Endothelial cell of umbilical vein (primary cell): ENCODE measurements at regions of chr17 and their contacts with region 1.

Region 1: DNA sequence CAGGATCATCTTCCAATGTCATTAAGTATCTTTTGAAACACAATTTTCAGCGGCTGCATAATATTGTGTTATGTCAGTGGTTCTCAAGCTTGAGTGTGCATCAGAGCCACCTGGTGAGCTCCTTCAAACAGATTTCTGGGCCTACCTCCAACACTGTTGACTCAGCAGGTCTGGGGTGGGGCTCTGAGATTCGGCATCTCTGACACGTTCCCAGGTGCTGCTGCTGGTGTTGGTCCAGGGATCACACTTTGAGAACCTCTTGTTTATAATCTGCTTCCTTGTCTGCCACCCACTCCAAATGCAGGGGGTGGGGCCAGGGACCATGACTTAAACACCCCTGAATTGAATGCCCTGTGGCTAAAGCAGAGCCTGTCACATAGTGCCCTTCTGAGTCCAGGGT is 73.8 kb upstream of the HNF1B start:
- DNase-seq: no peak
- H3K4me3 ChIP-seq: no peak overlapping the region
- H3K27ac ChIP-seq: no peak overlapping the region
- H3K4me1 ChIP-seq: peaks cover 3% of the 10 kb centered on the region
- H3K27me3 ChIP-seq: peaks cover 9% of the 10 kb centered on the region in 2 experiments
- CTCF ChIP-seq: no peak
- POLR2A ChIP-seq: no peak

Region 2: DNA sequence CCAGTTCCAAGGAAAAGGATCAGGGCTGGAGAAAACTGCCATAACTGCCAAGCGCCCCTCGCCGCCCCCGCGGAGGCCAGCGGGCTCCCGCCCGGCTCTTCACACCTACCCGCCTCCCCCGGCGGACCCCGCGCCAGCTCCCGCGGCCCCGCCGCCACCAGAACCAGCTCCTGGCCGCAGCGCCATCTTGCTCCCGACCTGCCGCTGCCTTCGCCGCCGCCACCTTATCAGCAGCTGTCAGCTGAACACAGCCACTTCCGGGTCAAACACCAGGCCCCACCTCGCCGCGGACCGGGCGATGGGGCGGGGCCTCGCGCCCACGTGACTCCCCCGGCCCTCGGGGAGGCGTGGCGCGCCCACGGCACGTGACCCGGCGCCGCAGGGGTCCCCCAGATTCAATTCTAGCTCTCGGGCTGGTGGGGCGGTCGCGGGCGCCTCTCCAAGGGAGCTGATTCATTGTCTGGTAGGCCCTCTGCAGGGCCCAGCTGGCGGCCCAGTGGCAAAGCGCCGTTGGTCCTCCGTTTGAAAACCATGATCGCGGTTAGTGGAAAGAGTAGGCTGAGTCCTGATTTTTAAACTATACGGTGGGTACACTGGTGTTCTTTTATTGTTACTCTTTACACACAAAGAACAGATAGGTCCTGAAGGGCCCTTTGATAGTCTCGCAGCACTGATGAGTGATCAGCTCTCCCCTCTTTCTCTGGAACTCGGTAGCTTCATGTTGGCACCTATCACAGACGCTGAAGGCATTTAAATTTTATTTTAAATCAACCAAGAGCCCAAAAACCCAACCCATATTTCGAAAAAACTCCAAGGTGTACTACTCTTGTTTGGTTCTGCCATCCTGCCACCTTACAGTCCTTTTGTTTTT is 209.3 kb before region 1 on chr17 and contains the start of gene SYNRG:
- CTCF ChIA-PET with region 1: interaction called, 11 read pairs
- POLR2A ChIA-PET with region 1: no interaction called
- dilution Hi-C with region 1: no loop called
- intact Hi-C with region 1: no loop called
- DNase-seq: peak; percentile 98
- H3K4me3 ChIP-seq: peak within 1 kb of the TSS; percentile 79 to 97 (median 97)
- H3K27ac ChIP-seq: peak within 1 kb of the TSS; percentile 82
- H3K4me1 ChIP-seq: peaks cover 30% of the 10 kb centered on the region
- H3K27me3 ChIP-seq: no peaks in the 10 kb centered on the region
- CTCF ChIP-seq: peak; percentile 12 to 47
- POLR2A ChIP-seq: peak; percentile 92
- total RNA-seq, gene SYNRG: 42.2 and 43.3 TPM in 2 replicates

Region 3: GRCh38 chr17:37650419-37651003 is 168.2 kb before region 1 on chr17:
- CTCF ChIA-PET with region 1: interaction called, 78 read pairs
- POLR2A ChIA-PET with region 1: no interaction called
- dilution Hi-C with region 1: no loop called
- intact Hi-C with region 1: loop called (anchors 1 kb)
- DNase-seq: peak; percentile 62
- H3K4me3 ChIP-seq: no peak overlapping the region
- H3K27ac ChIP-seq: peak overlapping the region; percentile 80
- H3K4me1 ChIP-seq: peaks cover 30% of the 10 kb centered on the region
- H3K27me3 ChIP-seq: no peaks in the 10 kb centered on the region
- CTCF ChIP-seq: peak; percentile 45 to 49
- POLR2A ChIP-seq: no peak

Region 4: DNA sequence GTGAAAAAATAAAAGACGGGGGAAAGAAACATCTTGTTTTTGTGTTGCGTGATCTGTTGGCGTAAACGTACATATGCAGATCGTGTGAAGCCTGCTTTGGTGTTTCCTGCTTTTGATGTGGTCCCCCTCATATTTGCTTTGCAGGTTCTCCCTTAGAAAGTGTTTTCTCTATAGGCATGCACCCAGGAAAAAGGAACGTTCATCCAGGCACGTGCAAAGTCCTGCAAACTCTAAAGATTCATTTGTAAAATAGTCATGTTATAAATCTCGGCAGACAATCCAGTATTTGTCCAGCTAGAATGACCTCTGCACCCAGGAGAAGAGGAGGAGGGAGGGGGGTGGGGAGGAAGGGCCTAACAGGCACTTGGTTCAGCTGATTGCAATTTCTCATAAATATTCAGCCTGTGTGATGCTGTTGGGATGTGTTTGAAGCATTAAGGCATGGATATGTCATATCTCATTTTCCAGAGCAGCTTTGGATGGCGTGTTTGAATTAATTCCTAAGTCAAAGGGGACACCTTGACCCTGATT is 135.2 kb before region 1 on chr17:
- CTCF ChIA-PET with region 1: no interaction called
- POLR2A ChIA-PET with region 1: no interaction called
- dilution Hi-C with region 1: no loop called
- intact Hi-C with region 1: no loop called
- DNase-seq: no peak
- H3K4me3 ChIP-seq: no peak overlapping the region
- H3K27ac ChIP-seq: no peak overlapping the region
- H3K4me1 ChIP-seq: no peaks in the 10 kb centered on the region
- H3K27me3 ChIP-seq: peaks cover 2 to 8% of the 10 kb centered on the region in 2 experiments
- CTCF ChIP-seq: no peak
- POLR2A ChIP-seq: no peak

Region 5: GRCh38 chr17:37701496-37701898 is 117.2 kb before region 1 on chr17:
- CTCF ChIA-PET with region 1: interaction called, 8 read pairs
- POLR2A ChIA-PET with region 1: no interaction called
- dilution Hi-C with region 1: no loop called
- intact Hi-C with region 1: loop called (anchors 1 kb)
- DNase-seq: peak; percentile 27
- H3K4me3 ChIP-seq: no peak overlapping the region
- H3K27ac ChIP-seq: no peak overlapping the region
- H3K4me1 ChIP-seq: no peaks in the 10 kb centered on the region
- H3K27me3 ChIP-seq: peaks cover 23 to 29% of the 10 kb centered on the region in 2 experiments
- CTCF ChIP-seq: peak; percentile 58 to 68
- POLR2A ChIP-seq: no peak

Region 6: DNA sequence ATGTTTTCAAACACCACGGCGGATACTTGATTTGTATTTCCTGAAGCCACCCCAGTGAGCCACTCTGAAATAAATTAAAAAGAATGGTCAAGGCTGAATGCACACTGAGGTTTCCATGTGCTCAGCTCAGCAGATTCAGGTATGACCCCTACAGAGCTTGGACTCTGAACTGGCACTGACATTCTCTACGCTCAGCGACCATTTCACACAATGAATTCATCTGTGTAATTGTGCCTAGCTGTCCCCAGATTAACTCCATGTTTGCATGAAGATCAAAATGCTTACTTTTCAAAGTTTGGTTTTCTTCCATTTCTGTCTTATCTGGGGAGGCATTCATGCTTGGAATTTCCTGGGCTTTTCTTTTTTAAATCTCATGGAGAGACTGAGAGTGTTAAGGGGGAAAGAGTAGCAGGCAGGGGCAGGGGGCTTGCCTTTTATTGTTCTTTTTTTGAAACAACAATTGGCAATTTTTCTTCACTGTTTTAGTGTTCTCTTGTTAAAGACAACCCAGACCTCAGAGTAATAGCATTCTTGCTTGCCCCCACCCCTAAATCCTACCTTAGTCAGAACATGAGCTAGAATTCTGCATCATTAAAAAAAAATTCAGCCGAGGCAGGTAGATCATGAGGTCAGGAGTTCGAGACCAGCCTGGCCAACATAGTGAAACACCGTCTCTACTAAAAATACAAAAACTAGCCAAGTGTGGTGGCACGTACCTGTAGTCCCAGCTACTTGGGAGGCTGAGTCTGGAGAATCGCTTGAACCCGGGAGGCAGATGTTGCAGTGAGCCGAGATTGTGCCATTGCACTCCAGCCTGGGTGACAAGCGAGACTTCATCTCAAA is 11.7 kb after region 1 on chr17:
- CTCF ChIA-PET with region 1: interaction called, 14 read pairs
- POLR2A ChIA-PET with region 1: no interaction called
- dilution Hi-C with region 1: no loop called
- intact Hi-C with region 1: no loop called
- DNase-seq: peak; percentile 62
- H3K4me3 ChIP-seq: no peak overlapping the region
- H3K27ac ChIP-seq: no peak overlapping the region
- H3K4me1 ChIP-seq: peaks cover 12% of the 10 kb centered on the region
- H3K27me3 ChIP-seq: peaks cover 7 to 11% of the 10 kb centered on the region in 2 experiments
- CTCF ChIP-seq: no peak
- POLR2A ChIP-seq: no peak

Region 7: DNA sequence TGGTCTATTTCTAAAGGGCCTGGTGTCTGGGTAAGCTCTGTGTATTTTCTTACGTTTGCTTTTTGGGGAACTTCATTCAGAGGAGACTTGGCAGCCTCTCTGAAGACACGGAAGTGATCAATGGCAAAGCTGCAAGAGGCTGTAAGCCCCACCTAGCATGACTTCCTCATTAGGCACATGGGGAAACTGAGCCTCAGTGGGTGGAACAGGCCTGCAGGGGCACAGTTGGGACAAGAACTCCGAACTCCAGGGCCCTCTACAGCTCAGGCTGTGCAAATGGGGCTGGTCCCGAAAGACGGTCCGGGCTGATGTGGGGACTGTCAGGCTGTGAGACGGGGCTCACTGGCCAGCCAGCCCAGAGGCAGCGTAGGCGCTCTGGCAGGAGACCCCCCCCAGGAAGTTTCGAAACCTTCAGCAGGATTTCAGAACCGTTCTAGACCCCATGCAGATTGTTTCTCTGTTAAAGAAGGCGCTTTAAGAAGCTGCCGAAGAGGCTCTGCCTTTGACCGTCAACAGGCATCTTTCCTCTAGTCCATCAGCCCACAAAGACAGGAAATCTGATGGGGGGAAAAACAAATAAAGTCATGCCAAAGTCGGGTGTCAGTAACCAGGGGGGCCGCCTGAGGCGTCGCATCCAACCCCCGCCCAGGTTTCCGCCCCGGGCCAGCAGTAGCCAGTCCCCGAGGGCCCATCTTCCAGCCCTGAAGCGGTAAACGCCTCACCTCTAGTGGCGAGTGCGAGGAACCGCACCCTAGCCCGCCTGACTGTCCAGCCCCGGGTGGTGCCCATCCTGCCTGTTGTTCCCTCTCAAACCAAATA is 25.7 kb after region 1 on chr17:
- CTCF ChIA-PET with region 1: interaction called, 19 read pairs
- POLR2A ChIA-PET with region 1: no interaction called
- dilution Hi-C with region 1: no loop called
- intact Hi-C with region 1: no loop called
- DNase-seq: peak; percentile 64
- H3K4me3 ChIP-seq: no peak overlapping the region
- H3K27ac ChIP-seq: no peak overlapping the region
- H3K4me1 ChIP-seq: peaks cover 4% of the 10 kb centered on the region
- H3K27me3 ChIP-seq: no peaks in the 10 kb centered on the region
- CTCF ChIP-seq: peak; percentile 74 to 95
- POLR2A ChIP-seq: no peak